PC-3 (cell line): ENCODE measurements at regions of chr1 and their contacts with region 1.

Region 1: DNA sequence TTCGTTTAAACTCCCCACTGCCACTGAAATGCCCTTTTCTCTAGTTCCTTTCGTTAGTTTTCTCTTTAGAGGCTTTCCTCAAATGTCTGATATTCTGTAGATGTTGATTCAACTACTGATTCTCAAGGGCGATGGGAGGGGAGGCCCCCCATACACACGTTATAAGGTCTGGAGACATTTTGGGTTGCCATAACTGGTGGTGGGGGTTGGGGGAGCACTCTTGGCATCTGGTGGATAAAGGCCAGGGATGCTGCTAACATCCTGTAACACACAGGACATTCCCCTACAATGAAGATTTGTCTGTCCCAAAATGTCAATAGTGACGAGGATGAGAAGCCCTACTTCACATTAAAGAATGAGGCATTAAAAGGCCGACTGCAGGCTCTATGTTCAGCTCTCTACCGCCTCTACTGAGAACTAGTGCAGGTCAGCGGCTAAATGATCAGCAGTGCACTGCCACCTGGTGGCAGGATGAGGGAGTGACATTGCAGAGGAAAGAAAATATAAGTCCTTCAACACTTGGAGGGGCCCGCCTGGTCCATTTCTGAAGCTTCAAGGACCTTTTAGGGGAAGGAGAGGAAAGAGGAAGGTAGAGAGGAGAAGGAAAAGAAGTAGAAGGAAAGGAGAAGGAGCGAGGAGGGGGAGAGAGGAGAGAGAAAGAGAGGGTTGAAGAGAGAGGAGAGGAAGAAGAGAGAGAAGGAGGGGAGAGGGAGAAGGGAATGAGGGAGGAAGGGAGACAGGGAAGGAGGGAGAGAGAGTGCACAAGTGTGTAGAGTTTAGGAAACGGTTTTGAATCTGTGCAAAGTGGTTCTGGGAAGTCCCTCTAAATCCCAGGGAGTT is 29.4 kb downstream of the ALG14 start:
- DNase-seq: peak; percentile 93
- ATAC-seq: peak; percentile 62
- H3K4me3 ChIP-seq: no peak overlapping the region
- H3K27ac ChIP-seq: no peak overlapping the region
- H3K4me1 ChIP-seq: peaks cover 34% of the 10 kb centered on the region
- H3K27me3 ChIP-seq: no peaks in the 10 kb centered on the region
- CTCF ChIP-seq: peak; percentile 99

Region 2: DNA sequence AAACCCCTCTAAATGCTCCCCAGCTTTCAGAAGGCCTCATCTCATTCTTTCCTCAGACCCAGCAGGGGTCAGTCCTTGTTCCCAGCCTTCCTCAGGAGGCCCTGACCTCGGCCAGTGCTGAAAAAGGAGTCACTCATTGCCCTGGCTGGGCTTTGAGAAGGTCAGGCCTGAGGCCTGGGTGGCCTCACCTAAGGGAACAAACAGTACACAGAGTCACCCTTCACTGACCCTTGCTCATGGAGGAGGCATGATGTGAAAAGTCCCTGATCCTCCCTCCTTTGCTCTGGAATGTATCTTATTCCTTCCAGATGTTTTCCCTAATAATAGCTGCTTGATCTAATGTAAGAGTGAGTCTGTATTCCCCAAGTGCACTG is 340.9 kb before region 1 on chr1:
- CTCF ChIA-PET with region 1: no interaction called
- POLR2A ChIA-PET with region 1: no interaction called
- intact Hi-C with region 1: no loop called
- DNase-seq: no peak
- ATAC-seq: no peak
- H3K4me3 ChIP-seq: no peak overlapping the region
- H3K27ac ChIP-seq: no peak overlapping the region
- H3K4me1 ChIP-seq: peaks cover 10% of the 10 kb centered on the region
- H3K27me3 ChIP-seq: no peaks in the 10 kb centered on the region
- CTCF ChIP-seq: no peak

Region 3: GRCh38 chr1:94805912-94806311 is 237.4 kb before region 1 on chr1:
- CTCF ChIA-PET with region 1: interaction called, 4 read pairs
- POLR2A ChIA-PET with region 1: no interaction called
- intact Hi-C with region 1: loop called (anchors 2 kb)
- DNase-seq: peak; percentile 77
- ATAC-seq: peak; percentile 36; the same call in 1 of the 2 replicates
- H3K4me3 ChIP-seq: no peak overlapping the region
- H3K27ac ChIP-seq: no peak overlapping the region
- H3K4me1 ChIP-seq: peaks cover 6% of the 10 kb centered on the region
- H3K27me3 ChIP-seq: no peaks in the 10 kb centered on the region
- CTCF ChIP-seq: peak; percentile 92

Region 4: GRCh38 chr1:94854458-94855306 is 188.7 kb before region 1 on chr1:
- CTCF ChIA-PET with region 1: interaction called, 73 read pairs
- POLR2A ChIA-PET with region 1: interaction called, 13 read pairs
- intact Hi-C with region 1: loop called (anchors 1 kb)
- DNase-seq: peak; percentile 99
- ATAC-seq: peak; percentile 84
- H3K4me3 ChIP-seq: peak overlapping the region; percentile 65
- H3K27ac ChIP-seq: peak overlapping the region; percentile 97
- H3K4me1 ChIP-seq: peaks cover 60% of the 10 kb centered on the region
- H3K27me3 ChIP-seq: no peaks in the 10 kb centered on the region
- CTCF ChIP-seq: peak; percentile 92

Region 5: GRCh38 chr1:94926915-94927404 is 116.4 kb before region 1 on chr1 and contains the start of gene CNN3:
- CTCF ChIA-PET with region 1: interaction called, 13 read pairs
- POLR2A ChIA-PET with region 1: no interaction called
- intact Hi-C with region 1: loop called (anchors 1 kb)
- DNase-seq: peak; percentile 87
- ATAC-seq: peak; percentile 79
- H3K4me3 ChIP-seq: peak within 1 kb of the TSS; percentile 89
- H3K27ac ChIP-seq: peak within 1 kb of the TSS; percentile 84
- H3K4me1 ChIP-seq: peaks cover 25% of the 10 kb centered on the region
- H3K27me3 ChIP-seq: no peaks in the 10 kb centered on the region
- CTCF ChIP-seq: no peak
- total RNA-seq, gene CNN3: 231 and 323 TPM in 2 replicates

Region 6: DNA sequence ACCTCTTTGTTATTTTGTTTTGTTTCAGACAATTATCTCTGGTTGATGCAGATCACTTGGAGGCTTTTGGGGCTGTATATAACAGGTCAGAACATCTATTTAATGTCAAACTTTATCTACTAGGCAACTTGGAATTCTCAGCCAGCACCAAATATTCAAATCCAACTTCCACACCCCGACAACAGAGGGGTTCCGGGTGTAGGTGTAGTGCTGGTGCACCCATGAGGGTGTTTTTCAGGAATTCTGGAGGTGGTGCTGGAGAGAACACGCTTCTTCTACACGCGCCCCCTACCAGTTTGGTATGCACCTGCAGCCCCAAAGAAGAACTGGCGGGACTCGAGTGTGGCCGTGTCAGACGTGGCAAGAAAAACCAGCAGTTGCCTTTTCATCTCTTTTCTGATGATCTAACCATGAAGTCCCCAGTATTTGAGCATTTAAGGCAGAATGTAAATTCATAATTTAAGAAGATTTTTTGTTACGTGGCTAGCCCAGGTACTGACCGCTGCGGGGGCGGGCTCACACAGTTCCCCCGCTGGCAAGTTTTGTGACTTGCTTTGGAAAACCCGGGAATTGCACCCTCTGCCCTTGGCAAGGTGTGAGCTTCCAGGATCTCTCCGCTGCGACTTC is 73.3 kb after region 1 on chr1:
- CTCF ChIA-PET with region 1: interaction called, 4 read pairs
- POLR2A ChIA-PET with region 1: no interaction called
- intact Hi-C with region 1: loop called (anchors 2 kb)
- DNase-seq: peak; percentile 83
- ATAC-seq: peak; percentile 78
- H3K4me3 ChIP-seq: peak overlapping the region; percentile 88
- H3K27ac ChIP-seq: 0 out of 2 replicates have a peak overlapping the region, but pooled peaks have one; percentile 1
- H3K4me1 ChIP-seq: peaks cover 18% of the 10 kb centered on the region
- H3K27me3 ChIP-seq: no peaks in the 10 kb centered on the region
- CTCF ChIP-seq: peak; percentile 89

Region 7: GRCh38 chr1:95226781-95227660 is 183.7 kb after region 1 on chr1:
- CTCF ChIA-PET with region 1: no interaction called
- POLR2A ChIA-PET with region 1: no interaction called
- intact Hi-C with region 1: no loop called
- DNase-seq: peak; percentile 75
- ATAC-seq: peak; percentile 84
- H3K4me3 ChIP-seq: peak overlapping the region; percentile 24; the same call in 1 of the 2 replicates
- H3K27ac ChIP-seq: peak overlapping the region; percentile 87
- H3K4me1 ChIP-seq: peaks cover 57% of the 10 kb centered on the region
- H3K27me3 ChIP-seq: no peaks in the 10 kb centered on the region
- CTCF ChIP-seq: no peak

Region 8: GRCh38 chr1:95467036-95467435 is 423.7 kb after region 1 on chr1:
- CTCF ChIA-PET with region 1: no interaction called
- POLR2A ChIA-PET with region 1: no interaction called
- intact Hi-C with region 1: loop called (anchors 5 kb)
- DNase-seq: peak; percentile 55
- ATAC-seq: no peak
- H3K4me3 ChIP-seq: no peak overlapping the region
- H3K27ac ChIP-seq: no peak overlapping the region
- H3K4me1 ChIP-seq: no peaks in the 10 kb centered on the region
- H3K27me3 ChIP-seq: no peaks in the 10 kb centered on the region
- CTCF ChIP-seq: peak; percentile 62; the same call in 1 of the 2 replicates